WTC11 (cell line): ENCODE measurements at regions of chr19 and their contacts with region 1.

Region 1: GRCh38 chr19:46431824-46432223 is 3.1 kb upstream of the PNMA8C start:
- DNase-seq: peak; percentile 75
- ATAC-seq: peak; percentile 76
- H3K4me3 Mint-ChIP-seq: no peak overlapping the region
- H3K27ac Mint-ChIP-seq: no peak overlapping the region
- H3K4me1 Mint-ChIP-seq: peaks cover 22% of the 10 kb centered on the region
- H3K27me3 Mint-ChIP-seq: peaks cover 29% of the 10 kb centered on the region
- CTCF ChIP-seq: peak; percentile 40

Region 2: DNA sequence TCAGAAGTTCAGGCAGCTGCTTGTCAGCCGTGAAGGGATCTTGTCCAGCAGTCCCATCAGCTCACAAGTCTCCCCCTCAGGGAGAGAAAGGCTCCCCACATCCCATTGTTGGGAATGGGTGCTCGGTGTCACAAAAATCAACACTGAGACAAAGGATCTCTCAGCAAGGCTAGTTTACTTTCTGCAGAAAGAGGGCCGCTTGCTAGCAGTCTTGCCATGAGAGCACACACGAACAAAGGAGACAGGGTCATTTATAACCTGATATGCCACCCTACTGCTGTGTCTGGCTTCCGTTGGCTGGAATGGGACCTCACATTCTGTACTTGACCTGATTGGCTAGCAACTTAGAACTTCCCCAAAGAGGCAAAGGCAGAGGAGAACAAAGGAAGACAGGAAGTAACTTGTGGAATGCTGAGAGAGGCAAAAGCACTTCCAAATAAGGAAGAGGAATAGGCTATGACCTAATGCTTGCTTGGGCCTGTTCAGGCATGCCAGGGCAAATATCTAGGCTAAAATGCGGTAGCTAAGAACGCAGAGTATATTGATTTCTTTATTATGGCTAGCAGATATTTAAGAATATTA is 298.6 kb before region 1 on chr19:
- CTCF ChIA-PET with region 1: no interaction called
- POLR2A ChIA-PET with region 1: no interaction called
- DNase-seq: peak; percentile 58
- ATAC-seq: peak; percentile 65
- H3K4me3 Mint-ChIP-seq: peak overlapping the region; percentile 67
- H3K27ac Mint-ChIP-seq: peak overlapping the region; percentile 99
- H3K4me1 Mint-ChIP-seq: peaks cover 29% of the 10 kb centered on the region
- H3K27me3 Mint-ChIP-seq: no peaks in the 10 kb centered on the region; the same call in 1 of the 2 replicates
- CTCF ChIP-seq: no peak

Region 3: DNA sequence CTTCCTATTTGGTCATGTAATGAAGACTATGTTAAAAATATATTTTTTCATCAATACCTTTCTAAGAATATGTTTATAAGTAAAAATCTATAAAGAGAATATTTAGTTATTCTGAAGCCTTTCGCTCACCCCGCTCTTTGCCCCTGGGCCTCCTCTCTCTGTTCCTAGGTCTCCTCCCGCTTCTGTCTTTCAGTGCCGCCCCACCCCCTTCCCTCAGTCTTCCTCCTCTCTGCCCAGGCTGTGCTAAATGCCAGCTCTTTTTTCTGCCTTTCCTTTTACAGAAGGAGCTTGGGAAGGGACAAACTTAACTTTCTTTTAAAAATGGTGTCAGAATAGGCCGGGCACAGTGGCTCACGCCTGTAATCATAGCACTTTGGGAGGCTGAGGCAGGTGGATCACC is 112.2 kb before region 1 on chr19:
- CTCF ChIA-PET with region 1: no interaction called
- POLR2A ChIA-PET with region 1: no interaction called
- DNase-seq: no peak
- ATAC-seq: no peak
- H3K4me3 Mint-ChIP-seq: no peak overlapping the region
- H3K27ac Mint-ChIP-seq: no peak overlapping the region
- H3K4me1 Mint-ChIP-seq: no peaks in the 10 kb centered on the region
- H3K27me3 Mint-ChIP-seq: no peaks in the 10 kb centered on the region
- CTCF ChIP-seq: no peak

Region 4: DNA sequence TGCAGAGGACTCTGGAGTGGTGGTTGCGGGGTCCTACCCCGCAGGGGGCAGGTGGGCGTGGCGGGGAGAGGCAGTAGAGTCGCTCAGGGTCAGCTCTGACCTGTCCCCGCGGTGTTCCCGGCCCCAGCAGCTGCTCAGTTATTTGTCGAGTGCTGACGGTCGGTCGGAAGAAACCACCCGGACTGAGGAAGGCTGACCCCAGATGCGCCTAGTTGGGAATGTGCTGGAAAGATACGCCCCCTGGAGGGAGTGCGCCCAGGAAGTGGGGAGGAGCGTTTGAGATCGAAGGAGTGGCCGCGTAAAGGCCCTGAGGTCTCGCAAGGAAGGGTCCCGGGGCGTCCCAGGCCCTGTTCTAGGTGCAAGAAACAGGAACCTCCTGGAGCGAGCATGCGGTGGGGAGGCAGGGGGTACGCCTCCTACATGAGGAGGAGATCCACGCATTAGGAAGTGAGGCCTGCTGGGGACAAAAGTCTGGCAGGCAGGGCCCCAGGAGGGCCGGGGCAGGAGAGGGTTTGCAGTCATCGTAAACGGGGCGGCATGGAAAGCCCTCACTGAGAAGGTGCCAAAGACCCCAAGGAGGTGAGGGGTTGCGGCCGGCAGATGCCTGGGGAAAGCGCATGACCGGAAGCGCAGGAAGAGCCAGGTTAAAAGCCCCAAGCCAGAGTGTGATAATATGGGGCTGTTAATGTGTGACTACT is 27.6 kb before region 1 on chr19:
- CTCF ChIA-PET with region 1: interaction called, 32 read pairs
- POLR2A ChIA-PET with region 1: interaction called, 5 read pairs
- DNase-seq: no peak
- ATAC-seq: peak; percentile 20
- H3K4me3 Mint-ChIP-seq: peak overlapping the region; percentile 77
- H3K27ac Mint-ChIP-seq: peak overlapping the region; percentile 1
- H3K4me1 Mint-ChIP-seq: peaks cover 57% of the 10 kb centered on the region
- H3K27me3 Mint-ChIP-seq: peaks cover 40% of the 10 kb centered on the region
- CTCF ChIP-seq: no peak; the same call in 1 of the 2 replicates

Region 5: DNA sequence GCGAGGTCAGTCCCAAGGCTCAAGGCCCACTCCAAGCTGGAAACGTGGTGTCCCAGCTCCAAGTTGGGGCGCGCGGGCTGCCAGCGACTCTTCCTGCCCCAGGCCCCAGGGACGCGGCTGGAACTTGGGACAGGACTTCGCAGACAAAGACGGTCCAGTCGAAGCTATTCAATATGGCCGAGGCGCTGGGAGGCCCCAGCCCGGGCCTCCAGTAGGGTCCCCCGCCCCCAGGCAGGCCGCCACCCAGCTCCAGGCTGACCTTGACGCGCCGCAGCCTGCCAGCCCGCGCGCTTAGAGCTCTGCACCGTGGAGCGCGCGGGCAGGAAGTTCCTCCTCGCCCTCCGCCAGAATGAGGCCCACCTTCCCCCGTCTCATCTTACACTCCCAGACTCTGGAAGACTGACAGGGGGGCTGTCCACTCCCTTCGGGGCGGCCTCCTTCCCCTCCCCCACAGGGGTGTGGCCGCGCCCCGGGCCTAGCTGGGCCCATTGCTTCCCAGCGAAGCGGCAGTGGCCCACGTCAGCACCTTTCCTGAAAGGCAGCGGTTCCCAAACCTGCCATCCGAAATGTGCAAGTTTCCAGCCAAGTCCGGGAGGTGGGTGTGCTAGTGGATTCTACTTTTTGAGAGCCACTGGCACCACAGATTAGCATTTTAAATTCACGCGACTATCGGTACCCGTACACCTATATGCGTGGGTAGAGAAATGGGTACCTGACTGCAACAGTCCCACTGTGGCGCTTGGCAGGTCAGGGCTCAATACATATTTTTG is 18.4 kb before region 1 on chr19 and contains the start of gene CCDC8:
- CTCF ChIA-PET with region 1: interaction called, 13 read pairs
- POLR2A ChIA-PET with region 1: interaction called, 8 read pairs
- DNase-seq: peak; percentile 94
- ATAC-seq: peak; percentile 88
- H3K4me3 Mint-ChIP-seq: peak within 1 kb of the TSS; percentile 95
- H3K27ac Mint-ChIP-seq: peak within 1 kb of the TSS; percentile 94
- H3K4me1 Mint-ChIP-seq: peaks cover 55% of the 10 kb centered on the region
- H3K27me3 Mint-ChIP-seq: peaks cover 6% of the 10 kb centered on the region
- CTCF ChIP-seq: no peak
- total RNA-seq, gene CCDC8: 25.2 to 27.2 TPM (median 25.7 TPM) in 3 replicates

Region 6: GRCh38 chr19:46495787-46496101 is 63.9 kb after region 1 on chr19 and contains the start of gene PNMA8B:
- CTCF ChIA-PET with region 1: interaction called, 10 read pairs
- POLR2A ChIA-PET with region 1: no interaction called
- DNase-seq: peak; percentile 97
- ATAC-seq: peak; percentile 73
- H3K4me3 Mint-ChIP-seq: peak within 1 kb of the TSS; percentile 72
- H3K27ac Mint-ChIP-seq: no peak within 1 kb of the TSS
- H3K4me1 Mint-ChIP-seq: peaks cover 26% of the 10 kb centered on the region
- H3K27me3 Mint-ChIP-seq: peaks cover 49% of the 10 kb centered on the region
- CTCF ChIP-seq: no peak
- total RNA-seq, gene PNMA8B: 2.8 to 4.0 TPM (median 3.6 TPM) in 3 replicates